Heart left ventricle (tissue), 16 donors: ENCODE measurements at regions of chr5 and their contacts with region 1.

Region 1: DNA sequence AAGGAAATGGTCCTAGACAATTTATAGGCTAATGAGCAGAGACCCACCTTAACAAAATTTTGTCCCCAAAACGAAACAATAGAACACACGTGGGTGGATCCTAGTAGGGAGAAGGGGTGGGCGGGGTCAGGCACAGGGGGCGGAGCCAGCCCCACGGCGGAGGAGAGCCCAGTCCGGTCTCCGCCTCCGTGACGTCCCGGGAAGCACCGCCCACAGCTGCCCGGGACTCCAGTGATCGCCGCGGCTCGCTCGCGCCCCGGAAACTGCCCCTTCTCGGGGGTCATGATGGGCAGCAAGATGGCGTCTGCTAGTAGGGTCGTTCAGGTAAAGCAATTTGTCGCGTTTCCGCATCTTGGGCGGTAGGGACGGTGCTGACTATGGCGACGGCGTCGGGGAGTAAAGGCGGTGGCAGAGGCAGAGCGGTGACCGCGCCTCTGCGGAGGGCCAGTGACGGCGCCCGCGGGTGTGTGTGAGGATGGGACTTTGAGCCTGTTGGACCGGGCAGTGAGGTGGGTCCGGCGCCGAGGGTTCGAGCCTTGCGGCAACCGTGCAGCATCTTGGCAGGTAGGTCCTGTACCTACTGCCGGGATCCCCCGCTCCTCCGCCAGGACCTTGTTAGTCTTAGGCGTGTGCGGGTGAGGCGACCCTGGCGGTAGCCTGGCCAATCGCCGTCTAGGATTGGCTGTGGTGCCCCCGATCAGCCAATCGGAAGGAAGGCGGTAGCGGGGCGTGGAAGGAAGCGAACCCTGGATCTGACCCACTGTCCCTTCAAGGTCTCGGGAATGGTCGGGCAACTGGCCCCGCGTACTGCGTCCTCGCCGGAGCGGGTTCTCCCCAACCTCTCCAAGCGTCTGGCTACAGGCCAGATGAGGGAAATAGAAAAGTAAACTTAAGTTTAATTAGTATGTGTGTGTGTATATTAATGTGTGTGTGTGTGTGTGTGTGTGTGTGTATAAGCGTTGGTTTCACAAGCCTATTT is 16.8 kb upstream of the CDK7 start:
- DNase-seq: peak; percentile 98 to 99 (median 98)
- ATAC-seq: peak; percentile 98 to 99 (median 98)
- H3K4me3 ChIP-seq: peak overlapping the region; percentile 58 to 100 (median 94)
- H3K27ac ChIP-seq: peak overlapping the region; percentile 93 to 99 (median 98)
- H3K4me1 ChIP-seq: peaks cover 0 to 32% (median 12%) of the 10 kb centered on the region in 12 donors
- H3K27me3 ChIP-seq: no peaks in the 10 kb centered on the region
- CTCF ChIP-seq: peak in 10 of 12 donors; percentile 8 to 47 (median 32)
- POLR2A ChIP-seq: peak; percentile 88

Region 2: DNA sequence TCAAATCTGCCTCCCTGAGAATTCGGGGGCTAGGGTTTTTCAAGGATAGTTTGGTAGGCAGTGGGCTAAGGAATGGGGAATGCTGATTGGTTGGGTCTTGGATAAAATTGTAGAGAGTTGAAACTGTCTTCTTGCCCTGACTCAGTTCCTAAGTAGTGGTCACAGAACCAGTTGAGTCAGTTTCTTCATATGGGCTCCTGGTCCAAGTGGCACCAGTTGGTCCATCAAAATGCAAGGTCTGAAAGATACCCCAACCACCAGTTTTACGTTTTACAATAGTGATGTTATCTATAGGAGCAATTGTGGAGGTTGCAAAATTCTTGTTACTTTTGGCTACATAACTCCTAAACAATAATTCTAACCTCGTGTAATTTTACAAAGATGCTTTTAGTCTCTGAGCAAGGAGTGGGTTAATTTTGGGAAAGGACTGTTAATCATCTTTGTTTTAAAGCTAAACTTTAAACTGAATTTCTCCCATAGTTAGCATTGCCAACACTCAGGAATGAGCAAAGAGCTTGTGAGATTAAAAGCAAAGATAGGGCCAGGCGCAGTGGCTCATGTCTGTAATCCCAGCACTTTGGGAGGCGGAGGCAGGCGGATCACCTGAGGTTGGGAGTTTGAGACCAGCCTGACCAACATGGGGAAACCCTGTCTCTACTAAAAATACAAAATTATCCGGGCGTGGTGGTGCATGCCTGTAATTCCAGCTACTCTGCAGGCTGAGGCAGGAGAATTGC is 24.6 kb after region 1 on chr5:
- intact Hi-C with region 1: loop called in 1 of 10 experiments (anchors 5 kb)
- DNase-seq: no peak
- ATAC-seq: no peak
- H3K4me3 ChIP-seq: no peak overlapping the region
- H3K27ac ChIP-seq: no peak overlapping the region
- H3K4me1 ChIP-seq: peaks cover 0 to 12% (median 1%) of the 10 kb centered on the region in 12 donors
- H3K27me3 ChIP-seq: no peaks in the 10 kb centered on the region
- CTCF ChIP-seq: no peak
- POLR2A ChIP-seq: no peak

Region 3: GRCh38 chr5:69285448-69286116 is 67.7 kb after region 1 on chr5:
- intact Hi-C with region 1: no loop called
- DNase-seq: no peak
- ATAC-seq: no peak
- H3K4me3 ChIP-seq: no peak overlapping the region
- H3K27ac ChIP-seq: no peak overlapping the region
- H3K4me1 ChIP-seq: no peaks in the 10 kb centered on the region
- H3K27me3 ChIP-seq: no peaks in the 10 kb centered on the region
- CTCF ChIP-seq: no peak
- POLR2A ChIP-seq: no peak